Posterior vena cava (tissue), 2 donors: ENCODE measurements at regions of chr19 and their contacts with region 1.

Region 1: DNA sequence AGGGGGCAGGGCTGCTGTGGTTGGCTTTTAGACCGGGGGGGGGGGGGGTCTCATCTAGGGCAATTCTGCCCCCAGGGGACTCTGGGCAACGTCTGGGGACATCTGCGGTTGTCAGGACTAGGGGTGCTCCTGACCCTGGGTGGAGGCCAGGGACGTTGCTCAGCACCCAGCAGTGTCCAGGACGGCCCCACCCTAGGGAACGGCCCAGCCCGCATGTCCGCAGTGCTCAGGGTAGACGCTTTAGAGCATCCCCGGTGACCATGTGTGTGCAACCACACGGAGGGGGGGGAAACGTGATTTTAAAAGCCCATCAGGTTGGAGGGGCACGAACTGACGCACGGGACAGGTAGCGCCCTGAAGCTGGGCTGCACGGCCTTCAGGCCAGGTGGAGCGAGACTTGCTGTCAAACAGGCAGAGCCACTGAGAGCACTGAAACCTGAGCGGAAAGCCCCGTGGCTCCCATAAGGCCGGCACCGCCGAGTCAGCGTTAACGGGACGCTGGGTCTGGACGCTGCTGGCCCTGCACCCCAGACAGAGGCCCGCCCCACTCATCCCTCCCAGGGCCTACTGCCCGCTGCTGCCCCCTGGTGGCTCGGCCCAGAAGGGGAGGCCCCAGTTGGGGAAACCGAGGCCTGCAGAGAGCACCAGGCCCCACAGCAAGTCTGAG is 8.3 kb downstream of the CACTIN start:
- DNase-seq: peak; percentile 93

Region 2: DNA sequence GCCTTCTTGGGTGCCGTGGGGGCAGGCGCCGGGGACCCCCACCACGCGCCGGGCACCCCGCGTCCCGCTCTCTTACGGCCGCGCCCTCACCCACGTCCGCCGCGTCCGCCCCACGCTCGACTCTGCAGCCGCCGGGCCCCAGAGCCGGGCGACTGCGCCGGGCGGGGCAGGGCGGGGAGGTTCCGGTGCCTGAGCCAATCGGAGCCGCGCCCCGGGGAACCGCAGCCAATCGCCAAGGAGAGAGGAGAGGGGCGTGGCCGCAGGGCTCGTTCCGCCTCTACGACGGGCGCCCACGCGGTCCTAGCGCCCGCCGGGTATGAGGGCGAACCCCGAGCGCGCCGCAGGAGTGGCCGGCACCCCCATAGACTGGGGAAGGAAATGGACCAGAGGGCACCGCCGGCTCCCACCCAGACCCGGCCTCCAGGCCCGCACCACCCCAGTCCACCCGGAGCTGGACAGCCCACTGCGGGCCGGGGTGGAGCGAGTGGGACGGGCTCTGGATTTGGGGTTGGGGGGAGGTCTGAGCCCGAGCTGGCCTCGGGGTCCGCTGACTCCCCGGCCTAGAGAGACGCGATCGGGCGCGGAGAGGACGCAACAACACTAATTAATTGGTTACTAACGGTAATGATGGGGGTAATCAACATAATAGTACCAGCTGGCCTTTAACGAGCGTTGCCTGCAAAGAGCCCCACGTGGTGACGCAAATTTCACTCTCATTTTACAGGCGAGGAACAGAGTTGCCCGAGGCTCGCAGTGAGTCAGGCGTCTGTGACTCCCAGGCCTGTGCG is 60.6 kb before region 1 on chr19 and contains the start of gene MFSD12:
- intact Hi-C with region 1: no loop called
- DNase-seq: peak; percentile 98
- total RNA-seq, gene MFSD12: 49.6 to 52.7 TPM

Region 3: GRCh38 chr19:3586124-3586626 is 32.1 kb before region 1 on chr19:
- intact Hi-C with region 1: loop called in 1 of 2 experiments (anchors 2 kb)
- DNase-seq: no peak

Region 4: DNA sequence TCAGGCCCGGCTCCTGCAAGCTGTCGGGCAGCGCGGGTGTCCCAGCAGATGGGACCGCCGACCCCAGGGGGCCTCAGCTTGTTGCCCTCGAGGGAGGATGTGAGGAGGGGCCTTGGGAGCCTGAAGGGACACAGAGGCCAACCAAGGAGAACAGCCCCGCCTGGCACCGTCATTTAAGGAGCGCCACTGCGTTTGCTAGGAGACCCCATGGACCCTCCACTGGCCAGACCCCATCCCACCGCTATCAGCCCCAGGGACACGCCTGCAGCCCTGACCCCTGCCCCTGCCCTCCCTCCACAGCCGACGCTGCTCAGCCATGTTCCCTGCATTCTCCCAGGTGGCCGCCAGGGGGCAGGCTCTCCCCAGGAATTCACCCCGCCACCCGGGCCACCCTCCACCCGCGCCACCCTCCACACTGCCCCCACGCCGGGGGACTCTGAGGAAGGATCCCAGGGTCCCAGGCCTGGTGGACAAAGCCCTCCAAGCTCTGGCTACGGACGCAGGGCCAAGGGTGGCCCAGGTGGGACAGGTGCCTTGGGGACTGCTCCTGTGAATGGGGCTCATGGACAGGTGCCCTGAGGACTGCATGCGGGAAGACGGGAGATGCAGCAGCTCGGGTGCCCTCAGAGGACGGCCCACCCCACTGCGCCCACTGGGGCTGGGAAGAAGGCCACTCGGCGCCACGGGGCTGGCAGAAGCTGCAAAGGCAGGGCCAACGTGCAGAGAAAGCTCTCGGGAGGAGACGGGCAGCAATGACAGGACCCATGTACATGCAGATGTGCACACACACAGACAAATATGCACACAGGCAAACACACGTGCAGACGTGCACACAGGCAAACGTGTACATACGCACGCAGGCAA is 47.6 kb after region 1 on chr19:
- intact Hi-C with region 1: no loop called
- DNase-seq: peak; percentile 93

Region 5: GRCh38 chr19:3748965-3749364 is 130.7 kb after region 1 on chr19:
- intact Hi-C with region 1: no loop called
- DNase-seq: no peak